MCF 10A (cell line): ENCODE measurements at regions of chr10 and their contacts with region 1.

Region 1: DNA sequence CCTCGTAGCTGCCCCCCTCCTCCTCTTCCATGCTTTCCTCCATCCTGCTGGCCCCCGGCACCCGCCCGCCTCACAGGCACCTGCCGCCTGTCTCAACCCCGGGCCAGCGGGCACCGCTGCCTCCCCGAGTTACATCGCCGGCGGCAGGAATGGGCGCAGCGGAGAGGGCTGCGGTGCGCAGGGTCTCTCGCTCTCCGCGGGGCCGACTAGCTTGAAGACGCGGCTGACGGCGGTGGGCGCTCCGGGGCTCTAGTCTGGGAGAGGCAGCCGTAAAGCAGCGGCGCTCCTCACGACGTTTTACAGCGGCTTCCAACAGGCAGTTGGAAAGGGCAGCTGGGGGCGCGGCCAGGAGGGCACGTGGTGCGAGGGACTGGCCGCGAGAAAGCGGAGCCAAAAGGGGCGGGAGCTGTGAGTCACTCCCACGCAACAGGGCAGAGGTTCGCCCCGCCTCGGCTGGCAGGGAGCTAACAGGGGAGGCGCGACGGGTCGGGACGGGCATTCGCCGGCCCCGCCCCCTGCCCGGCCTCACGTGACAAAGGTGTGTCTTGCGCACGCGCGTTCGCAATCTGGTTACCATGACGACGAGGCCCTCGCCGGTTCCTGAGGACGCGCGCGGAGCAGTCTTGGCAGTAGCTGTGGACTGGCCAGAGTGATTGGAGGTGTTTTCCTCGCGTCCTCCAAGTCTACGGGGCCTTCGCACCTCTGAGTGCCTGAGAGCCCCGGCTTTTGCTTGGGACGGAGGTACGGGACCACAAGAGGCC is at the start of gene CACUL1:
- DNase-seq: peak; percentile 99
- H3K4me3 Mint-ChIP-seq: peak within 1 kb of the TSS; percentile 93
- H3K27ac Mint-ChIP-seq: peak within 1 kb of the TSS; percentile 95
- H3K4me1 Mint-ChIP-seq: peaks cover 19% of the 10 kb centered on the region
- H3K27me3 Mint-ChIP-seq: no peaks in the 10 kb centered on the region
- CTCF ChIP-seq: no peak
- total RNA-seq, gene CACUL1: 45.9 and 51.0 TPM in 2 replicates

Region 2: DNA sequence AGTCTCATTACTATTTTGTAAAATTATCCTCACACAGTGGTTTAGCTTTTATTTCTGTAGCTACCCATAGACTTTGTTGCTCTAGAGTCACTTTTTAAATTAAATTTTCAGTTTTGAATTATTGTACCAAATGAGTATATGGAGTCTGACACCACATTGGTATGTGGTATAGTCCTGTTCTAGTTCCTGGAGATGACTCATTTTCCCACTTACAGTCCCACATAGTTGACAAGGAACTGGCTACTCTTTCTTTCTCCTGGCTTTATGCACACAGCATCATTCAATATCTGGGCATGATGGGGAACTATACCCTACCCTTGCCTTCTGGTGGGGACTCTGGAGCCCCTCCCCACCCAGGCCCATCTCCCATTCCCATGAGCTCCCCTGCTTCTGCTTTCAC is 615.6 kb before region 1 on chr10:
- CTCF ChIA-PET with region 1: no interaction called
- POLR2A ChIA-PET with region 1: no interaction called
- intact Hi-C with region 1: no loop called
- DNase-seq: no peak
- H3K4me3 Mint-ChIP-seq: no peak overlapping the region
- H3K27ac Mint-ChIP-seq: no peak overlapping the region
- H3K4me1 Mint-ChIP-seq: no peaks in the 10 kb centered on the region
- H3K27me3 Mint-ChIP-seq: no peaks in the 10 kb centered on the region
- CTCF ChIP-seq: no peak

Region 3: DNA sequence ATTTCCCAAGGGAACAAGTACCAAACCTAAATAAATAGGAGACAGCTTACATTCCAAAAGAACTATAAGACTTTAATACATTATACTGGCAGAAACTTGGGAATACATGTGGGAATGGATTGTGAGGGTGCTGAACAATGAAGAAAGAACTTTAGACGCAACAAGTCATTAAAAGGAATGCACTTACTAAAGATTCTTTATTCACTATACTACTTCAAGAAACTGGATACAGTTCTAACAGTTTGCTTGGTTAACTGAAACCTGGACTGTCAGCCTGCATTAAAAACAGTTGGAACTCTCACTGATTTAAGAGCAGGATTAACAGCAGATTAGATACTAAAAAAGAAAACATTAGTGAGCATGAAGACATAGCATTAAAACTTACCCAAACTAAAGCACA is 12.1 kb before region 1 on chr10:
- CTCF ChIA-PET with region 1: interaction called, 9 read pairs
- POLR2A ChIA-PET with region 1: interaction called, 47 read pairs
- intact Hi-C with region 1: loop called (anchors 1 kb)
- DNase-seq: no peak
- H3K4me3 Mint-ChIP-seq: peak overlapping the region; percentile 17
- H3K27ac Mint-ChIP-seq: peak overlapping the region; percentile 81
- H3K4me1 Mint-ChIP-seq: peaks cover 64% of the 10 kb centered on the region
- H3K27me3 Mint-ChIP-seq: no peaks in the 10 kb centered on the region
- CTCF ChIP-seq: no peak

Region 4: GRCh38 chr10:118800920-118801319 is 46.0 kb after region 1 on chr10:
- CTCF ChIA-PET with region 1: interaction called, 11 read pairs
- POLR2A ChIA-PET with region 1: interaction called, 74 read pairs
- intact Hi-C with region 1: loop called (anchors 2 kb)
- DNase-seq: peak; percentile 55
- H3K4me3 Mint-ChIP-seq: no peak overlapping the region
- H3K27ac Mint-ChIP-seq: no peak overlapping the region
- H3K4me1 Mint-ChIP-seq: peaks cover 29% of the 10 kb centered on the region
- H3K27me3 Mint-ChIP-seq: no peaks in the 10 kb centered on the region
- CTCF ChIP-seq: peak; percentile 69

Region 5: GRCh38 chr10:119006451-119007210 is 251.7 kb after region 1 on chr10:
- CTCF ChIA-PET with region 1: interaction called, 3 read pairs
- POLR2A ChIA-PET with region 1: interaction called, 11 read pairs
- intact Hi-C with region 1: no loop called
- DNase-seq: peak; percentile 98
- H3K4me3 Mint-ChIP-seq: no peak overlapping the region
- H3K27ac Mint-ChIP-seq: peak overlapping the region; percentile 46
- H3K4me1 Mint-ChIP-seq: peaks cover 30% of the 10 kb centered on the region
- H3K27me3 Mint-ChIP-seq: no peaks in the 10 kb centered on the region
- CTCF ChIP-seq: no peak

Region 6: GRCh38 chr10:119028900-119029612 is 274.2 kb after region 1 on chr10:
- CTCF ChIA-PET with region 1: interaction called, 3 read pairs
- POLR2A ChIA-PET with region 1: interaction called, 28 read pairs
- intact Hi-C with region 1: loop called (anchors 5 kb)
- DNase-seq: peak; percentile 72
- H3K4me3 Mint-ChIP-seq: peak overlapping the region; percentile 52
- H3K27ac Mint-ChIP-seq: no peak overlapping the region
- H3K4me1 Mint-ChIP-seq: peaks cover 38% of the 10 kb centered on the region
- H3K27me3 Mint-ChIP-seq: no peaks in the 10 kb centered on the region
- CTCF ChIP-seq: peak; percentile 8